Astrocyte of the cerebellum (primary cell): ENCODE measurements at regions of chr1 and their contacts with region 1.

Region 1: GRCh38 chr1:22204941-22205913 is 62.3 kb upstream of the WNT4 start:
- DNase-seq: no peak
- H3K4me3 ChIP-seq: no peak overlapping the region
- CTCF ChIP-seq: no peak

Region 2: DNA sequence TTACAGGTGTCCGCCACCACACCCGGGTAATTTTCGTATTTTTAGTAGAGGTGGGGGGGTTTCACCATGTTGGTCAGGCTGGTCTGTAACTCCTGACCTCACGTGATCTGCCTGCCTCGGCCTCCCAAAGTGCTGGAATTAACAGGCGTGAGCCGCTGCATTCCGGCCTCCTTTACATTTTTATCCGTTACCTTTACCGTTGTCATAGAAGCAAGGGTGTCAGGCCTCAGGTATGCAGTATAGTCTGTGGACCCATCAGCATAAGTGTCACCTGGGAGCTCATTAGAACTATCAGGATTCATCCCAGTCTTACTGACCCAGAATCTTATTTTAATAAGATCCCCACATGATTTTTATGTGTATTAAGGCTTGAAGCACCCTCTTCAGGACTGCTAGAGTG is 147.4 kb before region 1 on chr1:
- in situ Hi-C with region 1: no loop called
- DNase-seq: no peak
- H3K4me3 ChIP-seq: no peak overlapping the region
- CTCF ChIP-seq: no peak

Region 3: GRCh38 chr1:22168412-22168973 is 36.7 kb before region 1 on chr1:
- in situ Hi-C with region 1: loop called (anchors 5 kb)
- DNase-seq: no peak
- H3K4me3 ChIP-seq: no peak overlapping the region
- CTCF ChIP-seq: no peak